CD8-positive, alpha-beta T cell (primary cell): ENCODE measurements at regions of chr2 and their contacts with region 1.

Region 1: GRCh38 chr2:146108993-146109392 is 1589.1 kb upstream of the ZEB2 start:
- DNase-seq: no peak
- ATAC-seq: no peak
- H3K4me3 ChIP-seq: no peak overlapping the region
- H3K4me3 Mint-ChIP-seq: no peak overlapping the region
- H3K27ac ChIP-seq: no peak overlapping the region
- H3K27ac Mint-ChIP-seq: no peak overlapping the region
- H3K4me1 ChIP-seq: no peaks in the 10 kb centered on the region
- H3K4me1 Mint-ChIP-seq: no peaks in the 10 kb centered on the region
- H3K27me3 ChIP-seq: no peaks in the 10 kb centered on the region
- H3K27me3 Mint-ChIP-seq: no peaks in the 10 kb centered on the region
- CTCF ChIP-seq: no peak

Region 2: GRCh38 chr2:145771525-145771924 is 337.5 kb before region 1 on chr2:
- CTCF ChIA-PET with region 1: no interaction called
- POLR2A ChIA-PET with region 1: no interaction called
- intact Hi-C with region 1: no loop called
- DNase-seq: no peak
- ATAC-seq: no peak
- H3K4me3 ChIP-seq: no peak overlapping the region
- H3K4me3 Mint-ChIP-seq: no peak overlapping the region
- H3K27ac ChIP-seq: no peak overlapping the region
- H3K27ac Mint-ChIP-seq: no peak overlapping the region
- H3K4me1 ChIP-seq: no peaks in the 10 kb centered on the region
- H3K4me1 Mint-ChIP-seq: no peaks in the 10 kb centered on the region
- H3K27me3 ChIP-seq: no peaks in the 10 kb centered on the region
- H3K27me3 Mint-ChIP-seq: no peaks in the 10 kb centered on the region
- CTCF ChIP-seq: no peak

Region 3: GRCh38 chr2:146119586-146119985 is 10.6 kb after region 1 on chr2:
- CTCF ChIA-PET with region 1: no interaction called
- POLR2A ChIA-PET with region 1: no interaction called
- intact Hi-C with region 1: loop called (anchors 1 kb)
- DNase-seq: no peak
- ATAC-seq: no peak
- H3K4me3 ChIP-seq: no peak overlapping the region
- H3K4me3 Mint-ChIP-seq: no peak overlapping the region
- H3K27ac ChIP-seq: no peak overlapping the region
- H3K27ac Mint-ChIP-seq: no peak overlapping the region
- H3K4me1 ChIP-seq: no peaks in the 10 kb centered on the region
- H3K4me1 Mint-ChIP-seq: no peaks in the 10 kb centered on the region
- H3K27me3 ChIP-seq: no peaks in the 10 kb centered on the region
- H3K27me3 Mint-ChIP-seq: no peaks in the 10 kb centered on the region
- CTCF ChIP-seq: no peak

Region 4: GRCh38 chr2:146124741-146125140 is 15.7 kb after region 1 on chr2:
- CTCF ChIA-PET with region 1: no interaction called
- POLR2A ChIA-PET with region 1: no interaction called
- intact Hi-C with region 1: loop called (anchors 1 kb)
- DNase-seq: no peak
- ATAC-seq: no peak
- H3K4me3 ChIP-seq: no peak overlapping the region
- H3K4me3 Mint-ChIP-seq: no peak overlapping the region
- H3K27ac ChIP-seq: no peak overlapping the region
- H3K27ac Mint-ChIP-seq: no peak overlapping the region
- H3K4me1 ChIP-seq: no peaks in the 10 kb centered on the region
- H3K4me1 Mint-ChIP-seq: no peaks in the 10 kb centered on the region
- H3K27me3 ChIP-seq: no peaks in the 10 kb centered on the region
- H3K27me3 Mint-ChIP-seq: no peaks in the 10 kb centered on the region
- CTCF ChIP-seq: no peak

Region 5: DNA sequence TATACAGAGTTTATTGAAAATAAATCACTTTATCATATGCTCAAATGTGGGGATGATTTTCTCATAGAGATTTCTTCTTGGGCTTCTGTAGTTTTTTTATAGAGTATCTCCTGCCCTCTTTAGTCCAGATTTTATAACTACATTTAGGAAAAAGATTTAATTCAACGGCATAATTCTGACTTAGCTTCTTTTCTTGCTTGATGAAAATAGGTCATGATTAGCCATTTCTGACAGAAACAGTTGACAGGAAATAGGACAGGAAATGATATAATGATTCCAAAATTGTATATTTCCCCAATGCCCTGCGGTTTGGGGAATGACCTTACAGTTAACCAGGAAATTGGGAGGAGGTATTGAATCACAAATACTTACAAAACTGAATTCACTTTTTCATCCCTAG is 203.9 kb after region 1 on chr2:
- CTCF ChIA-PET with region 1: no interaction called
- POLR2A ChIA-PET with region 1: no interaction called
- intact Hi-C with region 1: no loop called
- DNase-seq: no peak
- ATAC-seq: no peak
- H3K4me3 ChIP-seq: no peak overlapping the region
- H3K4me3 Mint-ChIP-seq: no peak overlapping the region
- H3K27ac ChIP-seq: no peak overlapping the region
- H3K27ac Mint-ChIP-seq: no peak overlapping the region
- H3K4me1 ChIP-seq: no peaks in the 10 kb centered on the region
- H3K4me1 Mint-ChIP-seq: no peaks in the 10 kb centered on the region
- H3K27me3 ChIP-seq: no peaks in the 10 kb centered on the region
- H3K27me3 Mint-ChIP-seq: no peaks in the 10 kb centered on the region
- CTCF ChIP-seq: no peak